ENCODE measurements at regions of chr12 and their contacts with region 1.

Region 1: GRCh38 chr12:115998119-115998633 is 279.3 kb downstream of the MED13L start:
- DNase-seq: peak in 1 of 2 donors; percentile 71
- ATAC-seq: peak; percentile 49 to 61 (median 50)
- H3K4me3 ChIP-seq: no peak overlapping the region
- H3K4me3 Mint-ChIP-seq: no peak overlapping the region
- H3K27ac ChIP-seq: no peak overlapping the region
- H3K27ac Mint-ChIP-seq: no peak overlapping the region
- H3K4me1 ChIP-seq: no peaks in the 10 kb centered on the region
- H3K4me1 Mint-ChIP-seq: no peaks in the 10 kb centered on the region
- H3K27me3 ChIP-seq: no peaks in the 10 kb centered on the region
- H3K27me3 Mint-ChIP-seq: no peaks in the 10 kb centered on the region
- CTCF ChIP-seq: peak; percentile 90

Region 2: DNA sequence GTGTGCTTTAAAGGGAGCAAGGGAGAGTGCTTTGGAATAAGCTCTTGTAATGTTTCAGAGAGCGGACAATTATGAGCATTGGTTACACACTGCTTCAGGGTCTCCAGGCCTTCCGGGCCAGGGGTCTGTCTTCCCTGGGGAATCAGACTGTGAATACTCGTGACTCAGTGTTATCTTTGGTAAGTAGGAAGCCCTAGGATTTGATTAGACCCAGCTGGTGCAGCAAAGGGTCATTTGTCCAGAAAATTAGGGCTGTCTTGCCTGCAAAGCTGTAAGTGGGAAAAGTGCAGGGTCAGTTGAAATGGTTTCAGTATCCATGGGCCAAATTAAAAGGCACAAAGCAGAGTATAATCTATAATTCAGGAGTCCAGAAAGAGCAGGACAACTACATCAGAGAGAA is 196.3 kb before region 1 on chr12:
- intact Hi-C with region 1: no loop called
- DNase-seq: no peak
- ATAC-seq: no peak
- H3K4me3 ChIP-seq: no peak overlapping the region
- H3K4me3 Mint-ChIP-seq: no peak overlapping the region
- H3K27ac ChIP-seq: no peak overlapping the region
- H3K27ac Mint-ChIP-seq: no peak overlapping the region
- H3K4me1 ChIP-seq: no peaks in the 10 kb centered on the region
- H3K4me1 Mint-ChIP-seq: no peaks in the 10 kb centered on the region
- H3K27me3 ChIP-seq: no peaks in the 10 kb centered on the region
- H3K27me3 Mint-ChIP-seq: peaks cover 0 to 4% of the 10 kb centered on the region in 2 donors
- CTCF ChIP-seq: no peak

Region 3: DNA sequence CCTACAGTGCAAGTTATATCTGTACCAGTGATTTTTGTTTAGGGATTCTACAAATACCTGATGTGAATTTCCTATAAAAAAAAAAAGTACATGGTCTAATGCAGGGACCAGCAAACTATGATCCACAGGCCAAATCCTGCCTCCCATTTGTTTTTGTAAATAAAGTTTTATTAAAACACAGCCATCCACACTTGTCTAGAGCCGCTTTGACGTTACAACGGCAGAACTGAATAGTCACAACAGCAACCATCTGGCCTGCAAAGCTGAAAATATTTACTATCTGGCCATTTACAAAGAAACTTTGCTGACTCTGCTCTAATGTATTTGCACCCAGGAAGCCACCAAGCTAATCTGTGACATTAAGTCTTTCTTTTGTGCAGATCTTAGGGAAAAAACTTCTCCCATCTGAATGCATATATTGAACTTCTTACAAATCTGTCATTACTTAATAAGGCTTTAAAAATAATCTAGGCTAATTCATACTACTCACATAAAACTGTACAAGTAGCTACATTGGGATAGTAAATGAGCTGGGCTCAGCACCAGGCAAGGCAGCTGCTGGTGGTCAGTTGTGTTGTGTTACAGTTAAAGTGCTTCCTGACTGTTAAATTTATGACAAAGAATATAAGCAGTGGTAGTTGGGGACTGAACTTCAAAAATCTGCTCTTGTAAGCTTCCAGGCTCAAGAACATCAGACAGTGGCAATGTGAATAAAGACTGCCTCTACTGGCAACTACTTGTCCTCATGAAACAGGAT is 24.0 kb before region 1 on chr12:
- intact Hi-C with region 1: no loop called
- DNase-seq: no peak
- ATAC-seq: no peak
- H3K4me3 ChIP-seq: no peak overlapping the region
- H3K4me3 Mint-ChIP-seq: no peak overlapping the region
- H3K27ac ChIP-seq: no peak overlapping the region
- H3K27ac Mint-ChIP-seq: no peak overlapping the region
- H3K4me1 ChIP-seq: no peaks in the 10 kb centered on the region
- H3K4me1 Mint-ChIP-seq: no peaks in the 10 kb centered on the region
- H3K27me3 ChIP-seq: no peaks in the 10 kb centered on the region
- H3K27me3 Mint-ChIP-seq: no peaks in the 10 kb centered on the region
- CTCF ChIP-seq: no peak

Region 4: DNA sequence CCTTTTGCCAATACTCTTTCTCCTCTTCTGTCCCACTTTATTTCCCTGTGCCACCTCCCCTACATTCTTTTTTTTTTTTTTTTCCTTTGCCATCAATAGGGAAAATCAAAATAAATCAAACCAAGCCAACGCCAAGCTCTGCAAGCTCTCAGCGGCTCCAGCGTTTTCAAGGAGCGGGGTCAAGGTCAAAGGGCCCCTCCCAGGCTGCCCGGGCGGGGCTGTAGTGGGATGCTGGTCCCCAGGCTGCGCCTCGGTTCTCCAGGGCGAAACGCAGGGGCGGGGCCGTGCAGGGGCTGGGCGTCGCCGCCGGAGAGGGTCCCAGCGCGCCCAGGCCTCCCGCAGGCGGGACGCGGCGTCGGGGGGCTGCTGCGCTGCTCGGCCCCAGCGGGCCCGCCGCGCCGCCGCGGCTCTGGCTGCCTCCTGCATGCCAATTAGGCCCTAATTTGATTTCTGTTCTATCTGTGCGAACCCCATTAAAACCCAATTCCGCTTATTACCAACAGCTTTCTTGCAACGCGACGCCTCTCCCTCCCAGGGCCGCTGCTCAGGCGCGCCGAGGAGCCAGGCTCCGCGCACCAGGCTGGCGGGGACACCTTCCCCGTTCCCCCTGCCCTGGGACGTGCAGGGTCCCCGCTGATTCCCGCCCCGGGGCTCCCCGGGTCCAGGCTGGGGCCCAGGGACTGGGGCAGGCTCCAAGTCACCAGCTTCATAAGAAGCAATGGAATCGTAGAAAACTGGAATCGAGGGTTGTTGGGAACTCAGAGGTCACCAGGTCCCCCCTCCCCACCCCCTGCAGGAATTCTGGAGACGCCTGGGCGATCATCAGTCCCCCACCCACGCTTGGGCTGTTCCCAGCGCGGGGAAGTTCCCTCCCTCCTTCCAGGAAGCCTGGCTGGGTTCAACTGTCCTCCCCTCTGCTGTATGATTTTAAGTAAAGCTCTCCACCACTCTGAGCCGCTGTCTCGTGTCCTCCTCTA is 510.3 kb after region 1 on chr12:
- intact Hi-C with region 1: no loop called
- DNase-seq: peak in 1 of 2 donors; percentile 36
- ATAC-seq: peak in 2 of 3 donors; percentile 37 to 42
- H3K4me3 ChIP-seq: no peak overlapping the region
- H3K4me3 Mint-ChIP-seq: peak overlapping the region; percentile 37
- H3K27ac ChIP-seq: no peak overlapping the region
- H3K27ac Mint-ChIP-seq: no peak overlapping the region
- H3K4me1 ChIP-seq: peaks cover 6% of the 10 kb centered on the region
- H3K4me1 Mint-ChIP-seq: peaks cover 0 to 9% of the 10 kb centered on the region in 2 donors
- H3K27me3 ChIP-seq: no peaks in the 10 kb centered on the region
- H3K27me3 Mint-ChIP-seq: peaks cover 12 to 18% of the 10 kb centered on the region in 2 donors
- CTCF ChIP-seq: no peak

Region 5: GRCh38 chr12:116599285-116600136 is 601.3 kb after region 1 on chr12:
- intact Hi-C with region 1: loop called (anchors 1 kb)
- DNase-seq: peak; percentile 34 to 74
- ATAC-seq: peak; percentile 40 to 65 (median 60)
- H3K4me3 ChIP-seq: no peak overlapping the region
- H3K4me3 Mint-ChIP-seq: no peak overlapping the region
- H3K27ac ChIP-seq: no peak overlapping the region
- H3K27ac Mint-ChIP-seq: no peak overlapping the region
- H3K4me1 ChIP-seq: peaks cover 14% of the 10 kb centered on the region
- H3K4me1 Mint-ChIP-seq: peaks cover 2 to 4% of the 10 kb centered on the region in 2 donors
- H3K27me3 ChIP-seq: no peaks in the 10 kb centered on the region
- H3K27me3 Mint-ChIP-seq: peaks cover 0 to 10% of the 10 kb centered on the region in 2 donors
- CTCF ChIP-seq: peak; percentile 25

Region 6: GRCh38 chr12:116708826-116709756 is 710.9 kb after region 1 on chr12:
- intact Hi-C with region 1: loop called (anchors 1 kb)
- DNase-seq: peak; percentile 24 to 75
- ATAC-seq: peak; percentile 40 to 81 (median 58)
- H3K4me3 ChIP-seq: no peak overlapping the region
- H3K4me3 Mint-ChIP-seq: no peak overlapping the region
- H3K27ac ChIP-seq: no peak overlapping the region
- H3K27ac Mint-ChIP-seq: no peak overlapping the region
- H3K4me1 ChIP-seq: peaks cover 12% of the 10 kb centered on the region
- H3K4me1 Mint-ChIP-seq: peaks cover 10 to 15% of the 10 kb centered on the region in 2 donors
- H3K27me3 ChIP-seq: no peaks in the 10 kb centered on the region
- H3K27me3 Mint-ChIP-seq: peaks cover 7 to 18% of the 10 kb centered on the region in 2 donors
- CTCF ChIP-seq: peak; percentile 33